CD8-positive, alpha-beta T cell (primary cell): ENCODE measurements at regions of chr11 and their contacts with region 1.

Region 1: DNA sequence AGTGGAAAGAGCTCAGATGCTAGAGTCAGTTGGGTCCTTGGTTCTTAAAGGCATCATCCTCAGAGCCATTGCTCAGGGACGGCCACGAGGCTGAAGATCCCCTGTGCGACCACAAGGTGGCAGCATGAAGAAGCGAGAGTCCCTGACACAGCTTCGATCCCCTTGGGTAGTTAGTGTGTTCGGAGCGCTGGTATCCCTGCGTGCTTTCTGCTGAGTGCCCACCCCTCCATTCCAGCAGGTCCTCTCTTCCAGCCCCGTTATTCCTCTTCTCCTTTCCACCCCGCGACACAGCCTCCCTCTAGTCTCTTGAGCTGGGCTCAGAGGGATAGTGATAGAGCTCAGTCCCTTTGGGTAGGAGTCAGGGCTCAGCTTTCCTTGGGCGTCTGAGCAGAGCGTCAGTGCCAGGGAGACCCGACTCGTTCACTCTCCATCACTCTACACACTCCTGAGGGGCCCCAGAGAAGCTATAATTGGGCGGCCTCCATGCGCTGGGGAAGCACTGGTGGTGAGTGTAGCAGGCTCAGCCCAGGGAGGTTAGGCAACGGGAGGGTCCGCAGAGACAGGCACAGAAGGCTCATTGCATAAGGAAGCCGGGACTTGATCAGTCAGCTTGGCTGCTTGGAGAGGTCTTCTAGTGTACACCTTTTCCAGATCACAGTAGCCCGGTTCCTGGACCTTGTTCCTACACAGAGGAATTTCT is at the start of gene OR51D1:
- DNase-seq: peak; percentile 47 to 77 (median 68)
- ATAC-seq: peak; percentile 91
- H3K4me3 ChIP-seq: peak within 1 kb of the TSS in 1 of 2 experiments; percentile 37
- H3K4me3 Mint-ChIP-seq: no peak within 1 kb of the TSS
- H3K27ac ChIP-seq: no peak within 1 kb of the TSS
- H3K27ac Mint-ChIP-seq: no peak within 1 kb of the TSS
- H3K4me1 ChIP-seq: no peaks in the 10 kb centered on the region
- H3K4me1 Mint-ChIP-seq: no peaks in the 10 kb centered on the region
- H3K27me3 ChIP-seq: no peaks in the 10 kb centered on the region
- H3K27me3 Mint-ChIP-seq: peaks cover 12% of the 10 kb centered on the region
- CTCF ChIP-seq: peak; percentile 89
- total RNA-seq, gene OR51D1: not detected

Region 2: DNA sequence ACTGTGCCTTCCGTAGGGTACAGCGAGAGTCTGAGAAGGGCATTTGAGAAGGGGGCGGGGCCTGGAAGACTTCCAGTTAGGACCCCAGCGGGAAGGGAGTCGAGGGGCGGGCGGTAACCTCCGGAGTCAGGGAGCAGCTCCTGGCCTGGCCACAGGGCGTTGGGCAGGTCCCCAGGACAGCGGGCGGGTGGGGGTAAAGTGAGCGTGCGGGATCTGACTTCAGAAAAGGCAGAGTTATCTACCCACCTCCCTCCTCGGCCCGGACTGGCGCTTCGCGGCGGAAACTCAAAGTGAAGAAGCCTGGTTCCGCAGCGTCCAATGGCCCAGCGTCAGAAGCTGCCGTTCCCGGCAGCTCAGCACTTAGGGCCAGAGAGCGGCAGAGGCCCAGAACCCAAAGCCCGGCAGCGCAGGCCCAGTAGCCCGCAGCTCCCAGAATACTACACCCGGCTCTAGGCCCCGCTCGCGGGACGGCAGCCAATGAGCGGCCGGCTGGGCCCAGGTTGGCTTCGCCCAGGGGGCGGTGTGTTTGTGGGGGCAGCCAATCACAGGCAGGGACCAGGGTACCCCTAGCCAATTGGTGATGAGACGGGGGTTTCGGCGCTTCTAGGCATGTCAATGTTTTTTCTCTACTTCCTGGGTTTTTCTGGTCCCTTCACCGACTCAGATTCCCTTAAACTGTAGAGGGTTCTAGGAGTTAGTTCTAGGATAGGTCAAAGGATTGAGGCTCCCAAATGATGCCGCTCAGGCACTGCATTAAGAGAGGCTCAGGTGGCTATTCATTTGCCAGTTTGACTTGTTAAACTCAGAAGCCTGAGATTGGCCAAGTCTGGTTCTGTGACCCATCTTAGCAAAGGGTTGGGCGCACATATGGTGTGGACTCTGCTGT is 29.1 kb before region 1 on chr11 and contains the start of gene TRIM68:
- CTCF ChIA-PET with region 1: interaction called, 5 read pairs
- POLR2A ChIA-PET with region 1: no interaction called
- intact Hi-C with region 1: loop called in 1 of 2 experiments (anchors 1 kb)
- DNase-seq: peak; percentile 89 to 96 (median 95)
- ATAC-seq: peak; percentile 99
- H3K4me3 ChIP-seq: peak within 1 kb of the TSS; percentile 81 to 84
- H3K4me3 Mint-ChIP-seq: peak within 1 kb of the TSS; percentile 93
- H3K27ac ChIP-seq: peak within 1 kb of the TSS; percentile 76 to 85
- H3K27ac Mint-ChIP-seq: peak within 1 kb of the TSS; percentile 92
- H3K4me1 ChIP-seq: peaks cover 33% of the 10 kb centered on the region
- H3K4me1 Mint-ChIP-seq: peaks cover 56% of the 10 kb centered on the region
- H3K27me3 ChIP-seq: no peaks in the 10 kb centered on the region
- H3K27me3 Mint-ChIP-seq: no peaks in the 10 kb centered on the region
- CTCF ChIP-seq: no peak
- total RNA-seq, gene TRIM68: 6.0 to 6.9 TPM

Region 3: DNA sequence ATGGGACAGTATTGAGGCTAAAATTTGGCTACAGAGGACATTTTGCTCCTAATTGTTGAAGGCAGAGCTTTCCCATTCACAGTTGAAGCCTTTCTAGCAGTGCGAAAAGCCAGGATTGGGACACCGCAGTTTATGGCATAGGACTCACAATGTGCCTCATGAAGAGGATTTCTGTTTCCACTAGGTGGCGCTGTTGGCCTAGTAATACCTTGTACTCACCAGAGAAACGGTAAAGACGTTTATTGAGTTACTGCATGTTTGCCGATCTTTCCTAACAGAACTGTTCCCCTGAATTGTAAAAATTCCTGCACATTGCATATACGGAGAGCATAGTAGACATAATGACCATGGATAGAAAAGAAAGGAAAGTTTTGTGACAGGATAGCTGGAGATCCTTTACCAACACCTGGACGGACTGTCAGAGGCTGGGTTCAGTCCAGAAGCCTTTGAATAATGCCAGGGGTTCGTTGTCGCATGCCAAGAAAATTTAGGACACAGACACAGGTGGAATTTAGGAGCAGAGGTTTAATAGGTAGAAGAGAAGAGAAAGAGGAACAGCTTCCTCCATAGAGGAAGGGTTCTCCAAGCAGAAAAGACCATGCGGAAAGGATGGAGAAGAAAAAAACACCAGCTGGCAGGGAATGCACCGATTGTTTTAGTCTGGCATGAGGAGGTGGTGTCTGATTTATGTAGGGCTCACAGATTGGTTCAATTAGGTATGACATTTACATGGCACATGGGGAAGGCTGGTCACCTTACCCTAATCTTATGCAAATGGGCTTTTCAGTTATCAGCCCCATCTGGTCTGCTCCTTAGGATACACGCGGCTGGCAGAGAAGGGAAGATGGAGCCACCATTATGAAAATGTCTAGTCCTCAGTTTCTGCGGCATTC is 10.7 kb before region 1 on chr11:
- CTCF ChIA-PET with region 1: interaction called, 25 read pairs
- POLR2A ChIA-PET with region 1: interaction called, 3 read pairs
- intact Hi-C with region 1: no loop called
- DNase-seq: peak in 5 of 9 experiments; percentile 39 to 54 (median 43)
- ATAC-seq: no peak
- H3K4me3 ChIP-seq: no peak overlapping the region
- H3K4me3 Mint-ChIP-seq: no peak overlapping the region
- H3K27ac ChIP-seq: no peak overlapping the region
- H3K27ac Mint-ChIP-seq: no peak overlapping the region
- H3K4me1 ChIP-seq: no peaks in the 10 kb centered on the region
- H3K4me1 Mint-ChIP-seq: no peaks in the 10 kb centered on the region
- H3K27me3 ChIP-seq: no peaks in the 10 kb centered on the region
- H3K27me3 Mint-ChIP-seq: peaks cover 31% of the 10 kb centered on the region
- CTCF ChIP-seq: peak; percentile 54

Region 4: GRCh38 chr11:4647766-4648165 is 10.7 kb after region 1 on chr11:
- CTCF ChIA-PET with region 1: interaction called, 21 read pairs
- POLR2A ChIA-PET with region 1: no interaction called
- intact Hi-C with region 1: no loop called
- DNase-seq: no peak
- ATAC-seq: no peak
- H3K4me3 ChIP-seq: no peak overlapping the region
- H3K4me3 Mint-ChIP-seq: no peak overlapping the region
- H3K27ac ChIP-seq: no peak overlapping the region
- H3K27ac Mint-ChIP-seq: no peak overlapping the region
- H3K4me1 ChIP-seq: no peaks in the 10 kb centered on the region
- H3K4me1 Mint-ChIP-seq: no peaks in the 10 kb centered on the region
- H3K27me3 ChIP-seq: no peaks in the 10 kb centered on the region
- H3K27me3 Mint-ChIP-seq: peaks cover 8% of the 10 kb centered on the region
- CTCF ChIP-seq: no peak

Region 5: DNA sequence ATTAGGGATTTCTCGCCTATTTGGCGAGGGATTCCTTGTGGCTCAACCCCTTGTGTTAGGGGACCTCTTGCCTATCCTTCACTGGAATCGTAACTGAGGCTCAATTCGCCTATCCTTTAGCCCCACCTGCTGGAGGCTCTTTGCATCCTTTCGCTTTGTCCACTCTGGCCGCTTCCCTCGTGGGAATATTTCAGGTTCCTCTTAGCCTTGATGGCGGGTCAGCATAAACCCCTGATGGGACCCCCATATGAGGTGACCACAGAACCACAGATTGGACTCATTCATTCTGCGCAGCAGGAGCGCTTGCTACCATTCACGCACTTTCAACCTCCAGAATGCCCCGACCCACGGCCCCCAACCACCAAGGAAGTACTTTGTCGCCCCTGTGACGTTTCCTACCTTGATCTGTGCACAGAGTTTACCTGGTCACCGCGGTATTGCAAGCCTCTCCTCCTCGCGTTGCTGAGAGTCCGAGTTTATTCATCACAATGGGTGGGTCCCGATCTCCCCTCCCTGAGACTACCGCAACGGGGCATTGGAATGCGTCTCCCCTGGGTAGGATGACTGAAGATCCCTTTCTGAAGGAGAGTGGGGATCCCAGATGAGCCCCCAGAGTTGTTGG is 1171.5 kb after region 1 on chr11 and contains the start of gene OR52N2:
- CTCF ChIA-PET with region 1: interaction called, 6 read pairs
- POLR2A ChIA-PET with region 1: no interaction called
- intact Hi-C with region 1: loop called in 1 of 2 experiments (anchors 1 kb)
- DNase-seq: peak; percentile 46 to 83 (median 73)
- ATAC-seq: peak; percentile 87
- H3K4me3 ChIP-seq: peak within 1 kb of the TSS; percentile 58 to 64
- H3K4me3 Mint-ChIP-seq: peak within 1 kb of the TSS; percentile 91
- H3K27ac ChIP-seq: no peak within 1 kb of the TSS
- H3K27ac Mint-ChIP-seq: no peak within 1 kb of the TSS
- H3K4me1 ChIP-seq: peaks cover 7% of the 10 kb centered on the region
- H3K4me1 Mint-ChIP-seq: peaks cover 13% of the 10 kb centered on the region
- H3K27me3 ChIP-seq: no peaks in the 10 kb centered on the region
- H3K27me3 Mint-ChIP-seq: peaks cover 14% of the 10 kb centered on the region
- CTCF ChIP-seq: peak; percentile 82
- total RNA-seq, gene OR52N2: not detected